ENCODE measurements at regions of chr6 and their contacts with region 1.

Region 1: DNA sequence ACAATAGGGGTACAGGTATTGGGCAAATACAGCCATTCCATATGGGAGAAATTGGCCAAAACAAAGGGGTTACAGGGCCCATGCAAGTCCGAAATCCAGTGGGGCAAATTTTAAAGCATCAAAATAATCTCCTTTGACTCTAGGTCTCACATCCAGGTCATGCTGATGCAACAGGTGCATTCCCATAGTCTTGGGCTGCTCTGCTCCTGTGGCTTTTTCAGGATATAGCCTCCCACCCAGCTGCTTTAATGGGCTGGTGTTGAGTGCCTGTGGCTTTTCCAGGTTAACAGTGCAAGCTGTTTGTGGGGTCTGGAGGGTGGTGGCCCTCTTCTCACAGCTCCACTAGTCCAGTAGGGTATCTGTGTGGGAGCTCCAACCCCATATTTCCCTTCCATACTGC is 607.1 kb downstream of the MEI4 start:
- DNase-seq: no peak
- ATAC-seq: no peak

Region 2: DNA sequence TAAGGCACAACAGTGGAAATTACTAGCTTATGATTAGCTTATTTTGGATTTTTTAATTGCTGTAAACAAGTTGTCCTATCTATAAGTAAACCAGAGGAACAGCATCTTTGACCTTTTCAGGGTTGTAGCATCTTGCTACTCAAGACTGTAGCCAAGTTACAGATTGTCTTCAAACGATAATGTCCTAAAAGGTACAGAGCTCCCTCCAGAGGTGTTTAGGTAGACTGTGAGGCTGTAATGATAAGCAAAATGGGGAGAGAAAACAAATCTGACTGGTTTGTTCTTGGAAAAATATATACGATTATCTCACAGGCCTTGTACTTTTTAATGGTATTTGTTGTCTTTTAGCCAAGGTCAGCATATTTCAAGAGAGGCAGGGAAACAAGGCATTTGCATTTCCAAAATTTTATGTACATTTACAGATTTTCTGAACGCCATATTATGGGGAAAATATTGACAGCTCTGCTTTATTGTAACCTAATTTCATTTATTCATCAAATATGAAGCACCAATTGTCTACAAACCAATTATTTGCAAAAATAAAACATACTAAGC is 333.7 kb before region 1 on chr6:
- intact Hi-C with region 1: no loop called
- DNase-seq: no peak
- ATAC-seq: no peak

Region 3: GRCh38 chr6:78324213-78324612 is 64.3 kb after region 1 on chr6:
- intact Hi-C with region 1: loop called in 1 of 2 experiments (anchors 5 kb)
- DNase-seq: no peak
- ATAC-seq: no peak